Head of caudate nucleus (tissue), 42 donors: ENCODE measurements at regions of chr2 and their contacts with region 1.

Region 1: GRCh38 chr2:36355151-36355889 is at the start of gene CRIM1:
- DNase-seq: peak; percentile 46 to 93 (median 82)

Region 2: DNA sequence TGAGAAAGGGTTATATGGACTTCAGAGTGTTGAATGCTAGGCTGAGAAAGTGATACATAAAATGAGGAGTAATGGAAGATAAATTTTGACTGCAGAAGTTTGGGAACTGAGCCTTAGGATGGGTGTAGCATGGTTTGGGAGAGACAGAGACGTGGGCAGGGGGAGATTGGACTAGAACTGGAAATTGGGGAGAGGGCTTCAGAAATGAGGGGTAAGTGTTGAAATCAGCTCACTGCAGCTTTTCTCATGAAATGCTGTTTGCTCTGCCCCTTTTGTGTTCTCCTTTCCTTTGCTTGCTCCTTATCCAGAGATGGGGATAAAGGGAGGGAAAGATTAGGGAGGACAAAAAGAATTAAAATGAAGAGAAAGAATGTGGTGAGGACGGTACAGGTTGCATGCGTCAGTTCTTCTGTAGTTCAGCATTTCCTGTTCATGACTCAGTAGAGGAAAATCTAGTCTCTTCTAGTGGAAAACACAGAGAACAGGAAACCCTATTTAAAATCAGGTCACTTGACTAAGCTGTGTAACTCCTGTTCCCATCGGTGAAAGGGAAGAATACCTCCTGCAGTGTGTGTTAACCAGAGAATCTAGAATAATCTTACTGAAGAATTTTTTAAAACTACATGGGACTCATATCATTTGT is 105.8 kb after region 1 on chr2:
- intact Hi-C with region 1: loop called (anchors 10 kb)
- DNase-seq: peak in 1 of 42 donors; percentile 8

Region 3: GRCh38 chr2:36492216-36492945 is 137.1 kb after region 1 on chr2:
- intact Hi-C with region 1: loop called (anchors 10 kb)
- DNase-seq: no peak

Region 4: GRCh38 chr2:36667931-36668330 is 312.6 kb after region 1 on chr2:
- intact Hi-C with region 1: loop called (anchors 5 kb)
- DNase-seq: peak in 16 of 42 donors; percentile 7 to 47 (median 22)

Region 5: DNA sequence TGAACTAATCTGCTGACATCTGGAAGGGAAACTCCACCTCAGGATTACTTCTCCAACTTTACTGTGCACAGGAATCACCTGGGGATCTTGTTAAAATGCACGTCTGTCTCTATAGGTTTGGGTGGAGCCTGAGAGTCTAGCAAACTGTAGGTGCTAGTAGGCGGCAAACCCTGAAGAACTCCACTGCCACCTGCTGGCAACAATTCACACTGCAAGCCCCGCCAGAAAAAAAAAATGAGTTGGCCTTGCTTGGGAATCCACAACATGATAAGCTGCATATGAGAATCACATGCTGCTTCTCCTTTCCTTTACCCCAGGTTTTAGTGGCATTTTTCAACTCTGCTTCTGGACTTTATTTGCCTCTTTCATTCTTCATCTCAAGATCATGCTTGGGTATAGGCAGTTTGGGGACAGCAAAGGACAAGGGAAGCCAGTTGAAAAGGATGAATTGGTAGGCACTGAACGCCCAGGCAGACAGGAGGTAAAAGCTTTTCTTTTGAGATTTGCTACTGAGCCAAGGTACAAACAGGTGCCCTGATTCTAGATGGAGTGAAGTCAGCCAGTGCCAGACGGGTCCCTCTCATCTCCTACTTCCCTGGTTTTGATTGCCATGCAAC is 430.0 kb after region 1 on chr2:
- intact Hi-C with region 1: loop called (anchors 10 kb)
- DNase-seq: peak in 33 of 42 donors; percentile 16 to 78 (median 50)